ENCODE measurements at regions of chr12 and their contacts with region 1.

Region 1: GRCh38 chr12:49967042-49967776 is 5.5 kb downstream of the AQP5 start:
- DNase-seq: peak; percentile 94
- ATAC-seq: peak; percentile 92
- H3K4me3 Mint-ChIP-seq: peak overlapping the region; percentile 60
- H3K27ac Mint-ChIP-seq: no peak overlapping the region
- H3K4me1 Mint-ChIP-seq: peaks cover 5% of the 10 kb centered on the region
- H3K27me3 Mint-ChIP-seq: peaks cover 36% of the 10 kb centered on the region

Region 2: GRCh38 chr12:49750027-49750995 is 216.9 kb before region 1 on chr12:
- CTCF ChIA-PET with region 1: no interaction called
- POLR2A ChIA-PET with region 1: no interaction called
- DNase-seq: peak; percentile 59
- ATAC-seq: peak; percentile 85
- H3K4me3 Mint-ChIP-seq: peak overlapping the region; percentile 9
- H3K27ac Mint-ChIP-seq: peak overlapping the region; percentile 72
- H3K4me1 Mint-ChIP-seq: peaks cover 76% of the 10 kb centered on the region
- H3K27me3 Mint-ChIP-seq: no peaks in the 10 kb centered on the region

Region 3: GRCh38 chr12:49930515-49931288 is 36.5 kb before region 1 on chr12:
- CTCF ChIA-PET with region 1: interaction called, 11 read pairs
- POLR2A ChIA-PET with region 1: no interaction called
- DNase-seq: no peak
- ATAC-seq: no peak
- H3K4me3 Mint-ChIP-seq: no peak overlapping the region
- H3K27ac Mint-ChIP-seq: no peak overlapping the region
- H3K4me1 Mint-ChIP-seq: no peaks in the 10 kb centered on the region
- H3K27me3 Mint-ChIP-seq: peaks cover 17% of the 10 kb centered on the region

Region 4: DNA sequence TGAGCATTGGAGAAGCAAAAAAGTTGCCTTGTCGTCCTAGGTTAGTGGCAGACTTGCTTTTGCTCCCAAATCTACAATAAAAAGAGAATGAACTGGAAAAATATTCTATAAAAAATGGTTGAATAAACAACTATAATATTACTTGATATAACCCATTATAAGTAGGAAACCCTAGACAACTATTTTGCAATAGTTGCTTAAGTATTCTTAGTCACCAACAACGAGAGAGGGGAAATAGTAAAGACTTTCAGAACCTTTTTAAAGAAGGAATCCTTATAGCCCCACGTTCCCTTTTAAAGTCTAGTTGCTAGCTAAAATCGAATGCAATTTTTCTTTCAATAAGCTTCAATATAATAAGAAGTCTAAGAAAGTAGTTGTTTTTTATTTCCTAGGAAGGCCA is 23.1 kb after region 1 on chr12:
- CTCF ChIA-PET with region 1: interaction called, 17 read pairs
- POLR2A ChIA-PET with region 1: no interaction called
- DNase-seq: no peak
- ATAC-seq: no peak
- H3K4me3 Mint-ChIP-seq: no peak overlapping the region
- H3K27ac Mint-ChIP-seq: no peak overlapping the region
- H3K4me1 Mint-ChIP-seq: no peaks in the 10 kb centered on the region
- H3K27me3 Mint-ChIP-seq: no peaks in the 10 kb centered on the region

Region 5: GRCh38 chr12:50025187-50026059 is 58.2 kb after region 1 on chr12 and contains the start of gene RACGAP1:
- CTCF ChIA-PET with region 1: interaction called, 12 read pairs
- POLR2A ChIA-PET with region 1: interaction called, 4 read pairs
- DNase-seq: peak; percentile 98
- ATAC-seq: peak; percentile 98
- H3K4me3 Mint-ChIP-seq: peak within 1 kb of the TSS; percentile 94
- H3K27ac Mint-ChIP-seq: peak within 1 kb of the TSS; percentile 98
- H3K4me1 Mint-ChIP-seq: peaks cover 39% of the 10 kb centered on the region
- H3K27me3 Mint-ChIP-seq: no peaks in the 10 kb centered on the region
- total RNA-seq, gene RACGAP1: 185 to 200 TPM

Region 6: DNA sequence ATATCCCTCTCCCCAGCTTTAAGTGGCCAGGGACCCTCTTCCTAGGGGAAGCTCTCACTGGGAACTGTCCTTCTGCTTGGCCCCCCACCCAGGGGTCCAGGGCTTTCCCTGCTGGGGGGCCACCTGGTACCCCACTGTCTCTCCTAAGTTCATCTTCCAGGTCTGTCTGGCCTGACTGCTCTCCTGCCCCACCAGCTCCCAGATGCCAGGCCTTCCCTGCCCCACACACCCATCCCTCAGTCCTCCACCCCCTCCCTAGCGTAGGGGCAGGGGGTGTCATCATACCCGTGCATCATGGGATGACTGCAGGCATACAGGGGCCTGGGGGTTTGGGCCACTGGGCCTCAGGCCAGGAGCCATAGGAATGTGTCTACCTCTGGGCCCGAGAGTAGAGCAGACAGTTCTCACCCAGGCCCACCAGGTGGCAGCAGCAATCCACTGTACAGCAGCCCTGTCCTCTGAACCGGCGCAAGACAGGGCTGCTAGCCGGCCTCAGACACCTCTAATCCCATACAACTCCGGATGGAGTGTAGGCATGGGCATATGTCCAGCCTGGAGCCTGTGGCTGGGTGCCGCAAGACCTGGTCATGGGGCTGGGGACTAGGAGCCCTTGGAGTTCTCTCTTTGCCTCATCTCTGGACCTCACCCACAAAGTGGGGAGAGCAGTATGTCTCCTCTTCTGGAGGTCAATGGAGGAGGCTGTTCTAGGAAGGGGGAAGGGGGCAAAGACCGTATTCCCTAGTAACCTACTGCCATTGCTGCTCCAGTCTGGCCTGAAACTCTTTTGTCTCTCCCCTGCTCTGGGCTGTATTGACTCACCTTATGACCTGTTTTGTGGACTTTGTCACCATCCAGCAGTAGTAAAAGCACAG is 108.0 kb after region 1 on chr12:
- CTCF ChIA-PET with region 1: interaction called, 103 read pairs
- POLR2A ChIA-PET with region 1: no interaction called
- DNase-seq: peak; percentile 87
- ATAC-seq: peak; percentile 95
- H3K4me3 Mint-ChIP-seq: no peak overlapping the region
- H3K27ac Mint-ChIP-seq: peak overlapping the region; percentile 60
- H3K4me1 Mint-ChIP-seq: peaks cover 12% of the 10 kb centered on the region
- H3K27me3 Mint-ChIP-seq: no peaks in the 10 kb centered on the region

Measured in activated CD8-positive, alpha-beta T cell treated with anti-CD3 and anti-CD28 coated beads, Interleukin-2, amount 10 ng/mL, durations not matched to agents 7 days and 5 days (primary cell).